A549 (cell line): ENCODE measurements at regions of chr9 and their contacts with region 1.

Region 1: DNA sequence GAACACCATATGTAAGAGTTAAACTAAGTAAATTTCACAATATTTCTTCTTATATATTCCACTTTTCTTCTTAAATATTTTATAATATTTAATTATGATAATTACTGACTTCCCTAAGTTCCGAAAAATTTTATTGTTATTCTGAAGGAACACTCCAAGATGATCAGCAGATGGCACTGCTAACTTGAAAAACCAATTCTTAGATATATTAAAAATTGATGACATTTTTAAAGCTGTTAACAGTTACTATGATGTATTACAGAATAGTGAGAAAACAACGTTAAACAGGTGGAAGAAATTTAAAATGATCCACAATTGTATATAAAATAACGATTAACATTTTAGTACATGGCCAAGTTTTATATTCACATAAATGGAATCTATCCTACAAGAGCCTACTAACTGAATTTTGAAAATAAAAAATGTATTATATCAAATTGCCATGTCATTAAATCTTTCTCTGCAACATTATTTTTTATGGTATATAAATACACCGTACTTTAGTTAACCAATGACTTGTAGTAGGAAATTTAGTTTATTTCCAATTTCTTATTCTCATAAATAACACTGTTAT is 30.1 kb upstream of the MUSK start:
- DNase-seq: peak in 1 of 2 experiments; percentile 31
- ATAC-seq: no peak
- H3K4me3 ChIP-seq: no peak overlapping the region
- H3K27ac ChIP-seq: peak overlapping the region in 1 of 2 experiments; percentile 8; a peak in 1 of 6 replicates
- H3K4me1 ChIP-seq: 0 out of 3 replicates have a peak, but pooled peaks cover 3% of the 10 kb centered on the region
- CTCF ChIP-seq: peak; percentile 62
- EP300 ChIP-seq: no peak
- POLR2A ChIP-seq: no peak
- RAD21 ChIP-seq: peak; percentile 73 to 88

Region 2: GRCh38 chr9:110669438-110669837 is 31.0 kb after region 1 on chr9:
- CTCF ChIA-PET with region 1: no interaction called
- POLR2A ChIA-PET with region 1: no interaction called
- DNase-seq: no peak
- ATAC-seq: no peak
- H3K4me3 ChIP-seq: no peak overlapping the region
- H3K27ac ChIP-seq: no peak overlapping the region
- H3K4me1 ChIP-seq: peaks cover 12% of the 10 kb centered on the region
- CTCF ChIP-seq: no peak
- EP300 ChIP-seq: no peak
- POLR2A ChIP-seq: no peak
- RAD21 ChIP-seq: no peak

Region 3: GRCh38 chr9:111298731-111299598 is 660.5 kb after region 1 on chr9:
- CTCF ChIA-PET with region 1: interaction called, 12 read pairs
- POLR2A ChIA-PET with region 1: no interaction called
- DNase-seq: peak; percentile 16 to 66
- ATAC-seq: peak; percentile 68 to 88; a peak in 5 of 6 replicates
- H3K4me3 ChIP-seq: no peak overlapping the region
- H3K27ac ChIP-seq: peak overlapping the region; percentile 66 to 67; a peak in 5 of 6 replicates
- H3K4me1 ChIP-seq: peaks cover 9% of the 10 kb centered on the region; the same call in 1 of the 3 replicates
- CTCF ChIP-seq: peak; percentile 91
- EP300 ChIP-seq: no peak
- POLR2A ChIP-seq: no peak
- RAD21 ChIP-seq: peak; percentile 97 to 99